Ovary (tissue), 10 donors: ENCODE measurements at regions of chr5 and their contacts with region 1.

Region 1: DNA sequence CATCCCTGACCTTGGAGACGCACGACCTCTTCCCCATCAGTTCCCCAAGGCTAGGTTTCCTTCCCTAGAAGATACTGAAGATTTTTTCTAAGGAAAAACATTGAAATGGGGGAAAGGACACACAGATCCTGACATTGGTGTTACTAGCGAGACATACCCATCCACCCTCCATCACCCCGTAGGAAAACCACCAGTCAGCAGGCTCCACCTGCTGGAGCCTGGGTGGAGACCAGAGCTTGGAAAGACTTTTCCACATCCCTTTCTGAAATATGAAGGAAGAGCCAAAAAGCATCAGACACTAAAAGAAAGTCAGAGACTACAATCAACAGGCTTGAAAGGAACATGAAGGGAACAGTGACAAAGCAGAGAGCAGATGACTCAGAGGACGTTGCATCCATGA is 638.0 kb downstream of the IRX1 start:
- DNase-seq: no peak
- H3K4me3 ChIP-seq: no peak overlapping the region
- H3K27ac ChIP-seq: no peak overlapping the region
- H3K4me1 ChIP-seq: no peaks in the 10 kb centered on the region
- H3K27me3 ChIP-seq: no peaks in the 10 kb centered on the region
- CTCF ChIP-seq: no peak
- EP300 ChIP-seq: no peak
- POLR2A ChIP-seq: no peak

Region 2: DNA sequence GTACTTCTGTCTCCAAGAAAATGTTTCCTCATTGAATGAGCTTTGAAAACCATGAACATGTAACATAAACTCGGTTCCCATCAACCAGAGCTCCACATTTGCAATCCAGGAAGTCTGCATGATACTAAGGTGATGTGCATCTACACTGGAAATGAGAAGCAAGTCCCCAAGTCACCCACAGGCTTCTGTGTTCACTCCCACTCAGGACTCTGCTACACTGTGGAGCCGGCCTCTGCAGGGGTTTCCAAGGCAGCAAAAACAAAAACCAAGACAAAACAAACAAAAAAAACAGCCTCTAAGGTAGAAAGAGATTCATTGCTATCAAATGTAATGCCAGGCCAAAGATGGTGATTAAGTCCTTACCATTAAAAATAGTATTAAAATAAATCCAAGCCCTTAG is 44.4 kb before region 1 on chr5:
- intact Hi-C with region 1: loop called in 1 of 4 experiments (anchors 2 kb)
- DNase-seq: no peak
- H3K4me3 ChIP-seq: no peak overlapping the region
- H3K27ac ChIP-seq: no peak overlapping the region
- H3K4me1 ChIP-seq: no peaks in the 10 kb centered on the region
- H3K27me3 ChIP-seq: no peaks in the 10 kb centered on the region
- CTCF ChIP-seq: no peak
- EP300 ChIP-seq: no peak
- POLR2A ChIP-seq: no peak